GM12878 (cell line): ENCODE measurements at regions of chr1 and their contacts with region 1.

Region 1: DNA sequence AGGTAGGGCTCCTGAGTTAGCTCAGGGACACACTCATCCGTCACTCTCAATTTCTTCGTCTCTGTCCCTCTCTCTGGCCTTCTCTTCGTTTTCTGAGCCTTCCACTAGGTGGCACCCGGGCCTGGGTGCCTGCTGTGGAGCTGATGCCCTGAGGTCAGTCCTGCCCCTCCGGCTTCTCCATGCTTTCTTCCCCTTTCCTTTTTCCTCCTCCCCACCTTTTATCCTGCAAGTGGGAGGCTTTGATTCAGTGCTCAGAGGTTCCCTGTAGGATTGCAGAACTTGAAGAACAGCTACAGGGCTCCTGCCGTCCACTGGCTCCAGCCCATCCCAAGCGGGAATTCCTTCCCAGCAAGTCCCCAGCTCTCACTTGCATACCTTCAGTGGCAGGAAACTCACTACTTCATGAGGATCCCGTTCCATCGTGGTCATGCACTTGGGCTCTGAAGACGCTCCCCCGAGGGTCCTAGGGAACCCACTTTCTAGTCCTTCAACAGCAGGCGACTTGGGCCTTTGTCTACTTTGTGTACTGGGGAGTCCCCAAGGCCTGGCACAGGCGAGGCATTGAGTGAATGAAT is 45.6 kb downstream of the SRRM1 start:
- DNase-seq: no peak
- ATAC-seq: peak; percentile 99
- H3K4me3 ChIP-seq: no peak overlapping the region
- H3K27ac ChIP-seq: no peak overlapping the region
- H3K4me1 ChIP-seq: peaks cover 5% of the 10 kb centered on the region
- H3K27me3 ChIP-seq: no peaks in the 10 kb centered on the region
- CTCF ChIP-seq: peak; percentile 91 to 96 (median 96)
- EP300 ChIP-seq: no peak
- POLR2A ChIP-seq: no peak
- RAD21 ChIP-seq: peak; percentile 99

Region 2: DNA sequence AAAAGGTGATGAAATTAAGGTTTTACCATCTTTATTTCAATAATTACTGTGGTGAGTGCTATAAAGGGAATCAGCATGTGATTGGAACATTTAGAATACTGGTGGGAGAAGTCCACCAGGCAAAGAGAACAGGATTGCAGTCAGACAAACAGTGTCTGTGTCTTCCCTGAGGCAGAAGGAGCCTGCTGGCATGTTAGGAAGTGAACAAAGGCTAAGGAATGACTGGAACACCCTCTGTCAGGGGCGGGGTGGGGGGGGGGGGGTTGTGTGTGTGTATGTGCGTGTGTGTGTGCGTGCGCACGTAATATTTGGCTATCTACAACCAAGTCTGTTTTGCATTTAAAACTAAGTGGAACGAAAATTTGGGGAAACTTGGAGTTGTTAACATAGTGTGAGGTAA is 15.4 kb before region 1 on chr1:
- CTCF ChIA-PET with region 1: interaction called, 12 read pairs
- POLR2A ChIA-PET with region 1: no interaction called
- RAD21 ChIA-PET with region 1: interaction called, 4 read pairs
- SMC1A ChIA-PET with region 1: interaction called, 3 read pairs
- in situ Hi-C with region 1: no loop called
- intact Hi-C with region 1: no loop called
- DNase-seq: no peak
- ATAC-seq: no peak
- H3K4me3 ChIP-seq: no peak overlapping the region
- H3K27ac ChIP-seq: no peak overlapping the region
- H3K4me1 ChIP-seq: no peaks in the 10 kb centered on the region
- H3K27me3 ChIP-seq: no peaks in the 10 kb centered on the region
- CTCF ChIP-seq: no peak
- EP300 ChIP-seq: no peak
- POLR2A ChIP-seq: no peak
- RAD21 ChIP-seq: no peak

Region 3: DNA sequence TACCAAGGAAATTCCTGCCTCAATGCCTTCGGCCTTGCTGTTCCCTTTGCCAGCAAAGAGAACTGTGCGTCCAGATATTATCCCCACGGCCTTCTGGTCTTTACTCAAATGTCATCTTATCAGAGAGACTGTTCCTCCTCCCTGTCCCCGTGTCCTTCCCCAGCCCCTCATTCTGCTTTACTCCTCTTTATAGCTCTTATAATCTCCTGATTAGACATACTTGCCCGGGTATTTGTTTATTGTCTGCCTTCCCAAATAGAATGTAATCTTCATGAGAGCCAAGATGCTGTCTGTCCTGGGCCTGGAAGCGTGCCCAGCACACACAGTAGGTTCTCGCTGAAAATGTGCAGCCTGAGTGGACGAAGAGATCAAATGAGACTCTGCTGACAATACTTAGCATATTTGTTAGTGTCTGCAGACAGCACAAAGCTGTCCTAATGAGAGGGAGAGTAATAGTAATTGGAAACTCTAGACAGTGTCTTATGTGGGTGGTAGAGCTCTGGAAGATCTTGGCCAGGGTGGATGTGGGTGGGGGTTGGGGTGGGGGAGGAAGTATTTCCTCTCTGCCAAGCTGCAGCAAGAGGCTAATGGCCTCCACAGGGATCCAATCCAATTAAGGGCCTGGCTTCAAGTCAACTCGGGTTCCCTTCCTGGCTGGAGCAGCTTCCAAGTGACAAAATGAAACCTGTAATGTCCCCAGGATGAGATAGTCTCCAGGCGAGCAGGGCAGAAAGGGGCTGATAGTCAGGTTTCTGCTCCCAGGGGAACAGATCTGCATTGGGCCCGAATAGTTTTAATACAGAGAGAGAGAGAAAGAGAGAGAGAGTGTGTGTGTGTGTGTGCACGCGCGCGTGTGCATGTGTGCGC is 47.0 kb after region 1 on chr1:
- CTCF ChIA-PET with region 1: interaction called, 24 read pairs
- POLR2A ChIA-PET with region 1: no interaction called
- RAD21 ChIA-PET with region 1: interaction called, 19 read pairs
- SMC1A ChIA-PET with region 1: interaction called, 93 read pairs
- in situ Hi-C with region 1: no loop called
- intact Hi-C with region 1: no loop called
- DNase-seq: no peak
- ATAC-seq: no peak
- H3K4me3 ChIP-seq: no peak overlapping the region
- H3K27ac ChIP-seq: peak overlapping the region; percentile 33; the same call in 1 of the 2 replicates
- H3K4me1 ChIP-seq: peaks cover 38% of the 10 kb centered on the region
- H3K27me3 ChIP-seq: no peaks in the 10 kb centered on the region
- CTCF ChIP-seq: no peak
- EP300 ChIP-seq: no peak
- POLR2A ChIP-seq: no peak
- RAD21 ChIP-seq: no peak

Region 4: GRCh38 chr1:24762133-24762676 is 73.5 kb after region 1 on chr1:
- CTCF ChIA-PET with region 1: interaction called, 20 read pairs
- POLR2A ChIA-PET with region 1: interaction called, 3 read pairs
- RAD21 ChIA-PET with region 1: interaction called, 7 read pairs
- SMC1A ChIA-PET with region 1: interaction called, 40 read pairs
- in situ Hi-C with region 1: no loop called
- intact Hi-C with region 1: no loop called
- DNase-seq: no peak
- ATAC-seq: no peak; the same call in 1 of the 3 replicates
- H3K4me3 ChIP-seq: no peak overlapping the region
- H3K27ac ChIP-seq: no peak overlapping the region
- H3K4me1 ChIP-seq: peaks cover 4% of the 10 kb centered on the region; the same call in 1 of the 2 replicates
- H3K27me3 ChIP-seq: no peaks in the 10 kb centered on the region
- CTCF ChIP-seq: no peak
- EP300 ChIP-seq: no peak
- POLR2A ChIP-seq: no peak
- RAD21 ChIP-seq: no peak

Region 5: DNA sequence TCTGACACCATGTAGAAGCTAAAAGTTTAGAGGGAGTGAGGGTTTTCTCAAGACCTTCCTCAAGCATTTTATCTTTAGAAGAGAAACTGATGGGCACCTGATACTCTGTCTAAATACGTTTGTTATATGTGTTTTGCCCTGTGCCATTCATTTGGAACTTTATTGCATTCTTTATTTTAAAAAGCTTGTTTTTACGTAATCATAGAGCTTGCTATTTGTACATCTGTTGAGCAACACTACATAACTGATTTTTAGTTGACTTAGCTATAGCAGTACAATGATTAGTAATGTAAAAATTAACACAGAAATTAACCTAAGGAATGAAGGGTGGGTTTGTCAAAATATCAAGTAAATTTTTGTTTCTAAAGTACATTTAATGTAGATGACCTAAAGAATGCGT is 152.9 kb after region 1 on chr1:
- CTCF ChIA-PET with region 1: interaction called, 232 read pairs
- POLR2A ChIA-PET with region 1: no interaction called
- RAD21 ChIA-PET with region 1: interaction called, 124 read pairs
- SMC1A ChIA-PET with region 1: interaction called, 98 read pairs
- in situ Hi-C with region 1: loop called (anchors 5 kb)
- intact Hi-C with region 1: no loop called
- DNase-seq: no peak
- ATAC-seq: no peak
- H3K4me3 ChIP-seq: no peak overlapping the region
- H3K27ac ChIP-seq: no peak overlapping the region
- H3K4me1 ChIP-seq: no peaks in the 10 kb centered on the region
- H3K27me3 ChIP-seq: no peaks in the 10 kb centered on the region
- CTCF ChIP-seq: no peak
- EP300 ChIP-seq: no peak
- POLR2A ChIP-seq: no peak
- RAD21 ChIP-seq: no peak